ENCODE measurements at regions of chr1 and their contacts with region 1.

Region 1: GRCh38 chr1:158124999-158125398 is 55.7 kb upstream of the CD1D start:
- DNase-seq: peak; percentile 80
- H3K4me3 Mint-ChIP-seq: no peak overlapping the region
- H3K27ac Mint-ChIP-seq: no peak overlapping the region
- H3K4me1 Mint-ChIP-seq: no peaks in the 10 kb centered on the region
- H3K27me3 Mint-ChIP-seq: peaks cover 53% of the 10 kb centered on the region

Region 2: GRCh38 chr1:157963713-157964112 is 161.3 kb before region 1 on chr1:
- CTCF ChIA-PET with region 1: interaction called, 21 read pairs
- DNase-seq: peak; percentile 63
- H3K4me3 Mint-ChIP-seq: no peak overlapping the region
- H3K27ac Mint-ChIP-seq: no peak overlapping the region
- H3K4me1 Mint-ChIP-seq: no peaks in the 10 kb centered on the region
- H3K27me3 Mint-ChIP-seq: peaks cover 19% of the 10 kb centered on the region

Region 3: DNA sequence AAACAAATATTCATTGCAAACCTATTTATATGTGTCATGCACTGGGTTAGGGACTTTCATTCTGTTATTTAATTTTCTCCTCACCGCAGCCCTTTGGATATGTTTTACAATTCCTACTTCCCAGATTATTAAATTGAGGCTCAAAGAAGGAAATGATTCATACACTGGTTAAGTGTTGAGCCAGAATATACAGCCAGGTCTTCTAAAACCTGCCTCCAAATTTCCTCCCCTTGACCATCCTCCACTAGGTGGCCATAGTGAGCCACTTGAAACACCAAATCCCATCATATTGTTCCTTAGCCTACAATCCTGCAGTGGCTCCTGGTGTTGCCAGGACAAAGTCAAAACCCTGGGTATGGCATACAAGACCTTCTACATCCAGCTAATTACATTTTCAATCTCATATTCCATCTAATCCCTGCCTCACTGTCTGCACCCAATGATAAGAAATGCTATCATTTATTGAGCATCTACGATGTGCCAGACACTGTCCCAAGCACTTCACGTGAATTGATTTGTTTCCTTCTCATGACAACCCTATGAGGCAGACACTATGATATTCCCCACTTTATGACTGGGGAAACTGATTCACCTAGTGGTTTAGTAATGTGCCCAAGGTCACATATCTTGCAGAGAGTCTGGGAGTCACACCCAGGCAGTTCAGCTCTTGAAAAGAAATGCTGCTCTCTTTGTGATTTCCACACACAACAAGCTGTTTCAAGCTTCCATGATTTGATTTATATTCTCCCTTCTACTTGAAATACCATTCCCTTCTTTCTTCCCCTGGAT is 155.1 kb before region 1 on chr1:
- CTCF ChIA-PET with region 1: interaction called, 21 read pairs
- DNase-seq: no peak
- H3K4me3 Mint-ChIP-seq: no peak overlapping the region
- H3K27ac Mint-ChIP-seq: no peak overlapping the region
- H3K4me1 Mint-ChIP-seq: no peaks in the 10 kb centered on the region
- H3K27me3 Mint-ChIP-seq: peaks cover 3% of the 10 kb centered on the region

Region 4: DNA sequence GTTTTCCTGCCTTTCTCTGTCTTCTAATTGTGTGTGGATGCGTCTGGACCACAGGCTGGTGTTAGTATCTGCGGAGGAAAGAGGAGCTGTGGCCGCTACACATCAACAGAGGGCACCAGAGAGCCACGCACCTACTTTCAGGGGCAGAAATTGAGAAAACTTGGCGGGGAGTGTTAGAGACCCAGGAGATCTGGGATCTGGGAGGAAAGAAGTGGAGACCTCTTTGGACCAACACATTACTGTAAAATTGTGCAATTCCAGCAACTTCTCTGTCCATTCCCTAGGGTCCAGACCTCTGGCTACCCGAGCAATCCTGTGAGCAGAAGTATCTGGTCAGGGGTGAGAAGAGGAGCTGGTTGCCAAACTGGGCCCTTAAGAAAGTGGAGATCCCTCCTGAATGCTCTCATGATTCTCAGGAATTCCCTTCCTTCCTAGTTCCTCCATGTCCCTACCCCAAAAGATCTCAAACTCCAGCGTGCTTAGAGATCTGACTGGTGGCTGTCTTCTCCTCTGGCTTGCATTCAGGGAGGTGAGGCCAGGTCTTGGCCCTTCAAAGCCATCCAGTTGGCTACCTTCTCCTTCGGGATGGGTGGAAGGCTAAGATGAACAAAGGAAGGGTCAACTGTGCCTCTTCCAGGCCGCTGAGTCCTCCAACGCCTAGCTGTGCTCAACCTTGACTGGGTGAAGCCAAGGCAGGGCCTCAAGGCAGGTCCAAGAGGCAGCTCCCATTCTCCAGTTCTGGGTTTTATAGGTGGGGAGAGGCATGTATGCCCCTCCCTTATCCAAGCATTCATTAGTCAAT is 132.8 kb before region 1 on chr1:
- CTCF ChIA-PET with region 1: interaction called, 52 read pairs
- DNase-seq: peak; percentile 62
- H3K4me3 Mint-ChIP-seq: no peak overlapping the region
- H3K27ac Mint-ChIP-seq: no peak overlapping the region
- H3K4me1 Mint-ChIP-seq: peaks cover 4% of the 10 kb centered on the region
- H3K27me3 Mint-ChIP-seq: peaks cover 72% of the 10 kb centered on the region

Region 5: GRCh38 chr1:158013840-158014730 is 110.9 kb before region 1 on chr1:
- CTCF ChIA-PET with region 1: no interaction called
- DNase-seq: no peak
- H3K4me3 Mint-ChIP-seq: no peak overlapping the region
- H3K27ac Mint-ChIP-seq: no peak overlapping the region
- H3K4me1 Mint-ChIP-seq: no peaks in the 10 kb centered on the region
- H3K27me3 Mint-ChIP-seq: peaks cover 44% of the 10 kb centered on the region

Region 6: DNA sequence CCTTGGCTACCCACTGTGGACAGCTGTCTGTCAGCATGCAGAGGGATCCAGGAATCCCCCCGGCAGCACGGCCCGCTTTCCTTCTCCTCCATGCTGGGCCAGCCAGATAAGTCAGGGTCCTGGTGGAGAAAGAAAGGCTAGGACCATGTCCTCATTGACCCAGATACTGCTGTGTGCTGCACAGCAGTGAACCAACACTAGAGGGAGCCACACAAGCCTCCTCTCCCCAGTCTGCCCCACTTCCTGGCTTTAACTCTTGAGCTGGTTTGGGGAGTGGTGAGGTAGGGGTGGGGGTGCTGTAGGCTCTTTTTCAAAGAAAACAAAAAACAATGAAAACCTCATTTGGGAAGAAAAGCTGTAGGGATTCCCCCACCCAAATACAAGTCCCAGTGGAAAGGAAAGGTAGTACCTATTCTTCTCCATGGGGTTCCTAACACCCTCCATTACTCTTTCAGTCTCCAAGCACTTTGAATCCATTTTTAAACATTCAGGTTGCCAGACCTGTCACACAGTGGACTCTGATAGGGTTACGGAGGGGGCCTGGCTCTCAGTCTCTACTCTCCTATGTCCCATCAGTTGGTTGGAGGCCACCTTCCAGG is 29.2 kb before region 1 on chr1:
- CTCF ChIA-PET with region 1: interaction called, 171 read pairs
- DNase-seq: peak; percentile 59
- H3K4me3 Mint-ChIP-seq: no peak overlapping the region
- H3K27ac Mint-ChIP-seq: no peak overlapping the region
- H3K4me1 Mint-ChIP-seq: no peaks in the 10 kb centered on the region
- H3K27me3 Mint-ChIP-seq: no peaks in the 10 kb centered on the region

Region 7: GRCh38 chr1:158112994-158113758 is 11.8 kb before region 1 on chr1:
- CTCF ChIA-PET with region 1: interaction called, 11 read pairs
- DNase-seq: peak; percentile 44
- H3K4me3 Mint-ChIP-seq: peak overlapping the region; percentile 35
- H3K27ac Mint-ChIP-seq: no peak overlapping the region
- H3K4me1 Mint-ChIP-seq: peaks cover 11% of the 10 kb centered on the region
- H3K27me3 Mint-ChIP-seq: peaks cover 69% of the 10 kb centered on the region

Measured in activated naive CD4-positive, alpha-beta T cell treated with anti-CD3 and anti-CD28 coated beads, Interleukin-2, amount 10 ng/mL, durations not matched to agents 7 days and 5 days (primary cell).